Posterior cingulate gyrus (tissue), 11 donors: ENCODE measurements at regions of chr17 and their contacts with region 1.

Region 1: GRCh38 chr17:82065638-82066303 is at the start of gene DUS1L:
- DNase-seq: peak in 7 of 10 donors; percentile 44 to 95 (median 62)

Region 2: DNA sequence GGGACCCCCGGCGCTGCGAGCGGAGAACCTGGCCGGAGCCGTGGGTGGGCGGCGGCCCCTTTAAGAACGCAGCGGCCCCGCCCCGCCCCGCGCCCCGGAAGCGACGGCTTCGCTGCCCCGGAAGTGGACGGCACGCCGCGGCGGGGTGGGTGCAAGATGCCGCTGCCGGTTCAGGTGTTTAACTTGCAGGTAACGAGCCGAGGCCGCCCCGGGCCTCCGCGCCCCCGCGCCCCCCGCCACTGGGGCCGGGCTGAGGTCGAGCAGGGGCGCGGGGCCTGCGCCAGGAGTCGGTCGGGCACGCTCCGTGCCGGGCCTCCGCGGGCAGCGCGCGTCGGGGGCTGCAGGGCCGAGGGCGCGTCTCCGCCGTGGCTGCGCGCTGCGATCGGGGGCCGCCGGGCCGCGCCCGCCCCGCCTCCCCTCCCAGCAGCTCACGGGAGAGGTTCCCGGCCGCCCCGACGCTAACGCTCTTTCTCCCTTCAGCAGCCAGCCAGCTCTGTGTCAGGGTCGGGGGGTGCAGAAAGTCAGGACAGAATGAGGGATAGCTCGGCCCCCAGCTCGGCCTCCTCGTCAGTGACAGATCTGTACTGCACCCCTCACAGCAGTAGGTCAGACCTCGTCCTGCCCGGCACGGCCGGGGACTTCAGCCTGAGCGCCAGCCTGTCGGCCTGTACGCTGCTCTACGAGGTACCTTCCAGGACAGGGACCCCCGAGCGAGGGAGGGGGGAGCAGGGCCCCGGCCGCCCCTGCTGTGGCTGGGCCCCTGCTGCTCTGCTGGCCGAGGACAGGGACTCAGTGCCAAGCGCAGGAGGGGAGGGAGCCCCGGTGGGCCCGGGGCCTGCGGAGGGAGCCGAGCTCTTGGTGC is 13.8 kb before region 1 on chr17 and contains the starts of genes GPS1 and RFNG:
- intact Hi-C with region 1: loop called (anchors 1 kb)
- DNase-seq: peak; percentile 74 to 98 (median 84)